ENCODE measurements at regions of chr14 and their contacts with region 1.

Region 1: GRCh38 chr14:24806061-24806678 is 172.2 kb upstream of the GZMB start:
- DNase-seq: peak; percentile 16
- ATAC-seq: peak; percentile 89
- H3K4me3 ChIP-seq: no peak overlapping the region
- H3K27ac ChIP-seq: no peak overlapping the region
- H3K4me1 ChIP-seq: no peaks in the 10 kb centered on the region
- H3K27me3 ChIP-seq: no peaks in the 10 kb centered on the region
- CTCF ChIP-seq: peak; percentile 79 to 92 (median 82)
- EP300 ChIP-seq: no peak
- POLR2A ChIP-seq: no peak
- RAD21 ChIP-seq: peak; percentile 75

Region 2: DNA sequence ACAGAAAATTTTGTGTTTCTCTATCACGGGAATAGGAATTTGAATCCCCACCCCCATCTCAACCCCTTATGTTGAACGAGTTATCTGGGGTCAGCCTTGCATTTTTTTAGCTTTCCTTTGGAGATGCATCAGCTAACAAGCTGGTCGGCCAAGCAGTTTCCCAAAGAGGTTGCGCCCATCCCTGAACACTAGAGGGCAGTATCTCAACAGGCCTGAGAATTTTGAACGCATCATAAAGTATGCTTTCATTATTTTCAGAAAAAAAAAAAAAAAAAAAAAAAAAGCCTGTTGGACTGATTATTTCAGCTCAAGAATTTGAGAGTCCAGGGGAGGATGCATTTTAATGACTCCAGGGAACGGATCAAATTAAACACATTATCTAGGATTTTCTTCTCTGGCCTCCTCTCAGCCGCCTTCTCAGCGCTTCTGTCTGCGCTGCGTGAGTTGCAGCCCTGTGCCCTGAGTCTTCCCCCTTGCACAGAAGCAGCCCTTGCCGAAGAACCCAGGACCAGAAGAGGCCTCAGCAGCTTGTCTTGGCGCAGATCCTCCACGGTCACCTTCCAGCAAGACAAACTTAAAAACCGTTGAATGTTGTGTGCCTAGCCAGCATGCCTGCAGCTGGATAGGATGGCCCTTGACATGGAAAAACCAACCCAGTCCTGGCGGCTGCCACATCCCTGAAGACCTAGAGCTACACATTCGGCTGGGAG is 95.6 kb before region 1 on chr14:
- CTCF ChIA-PET with region 1: interaction called, 188 read pairs
- POLR2A ChIA-PET with region 1: no interaction called
- RAD21 ChIA-PET with region 1: interaction called, 107 read pairs
- SMC1A ChIA-PET with region 1: interaction called, 217 read pairs
- in situ Hi-C with region 1: no loop called
- intact Hi-C with region 1: no loop called
- DNase-seq: no peak
- ATAC-seq: peak; percentile 50
- H3K4me3 ChIP-seq: no peak overlapping the region
- H3K27ac ChIP-seq: no peak overlapping the region
- H3K4me1 ChIP-seq: peaks cover 15% of the 10 kb centered on the region
- H3K27me3 ChIP-seq: no peaks in the 10 kb centered on the region
- CTCF ChIP-seq: peak; percentile 81 to 89 (median 82)
- EP300 ChIP-seq: no peak
- POLR2A ChIP-seq: no peak
- RAD21 ChIP-seq: peak; percentile 80

Region 3: GRCh38 chr14:24837280-24838046 is 31.3 kb after region 1 on chr14:
- CTCF ChIA-PET with region 1: interaction called, 13 read pairs
- POLR2A ChIA-PET with region 1: no interaction called
- RAD21 ChIA-PET with region 1: interaction called, 11 read pairs
- SMC1A ChIA-PET with region 1: interaction called, 27 read pairs
- in situ Hi-C with region 1: no loop called
- intact Hi-C with region 1: no loop called
- DNase-seq: no peak
- ATAC-seq: 0 out of 3 replicates have a peak, but pooled peaks have one; percentile 13
- H3K4me3 ChIP-seq: no peak overlapping the region
- H3K27ac ChIP-seq: no peak overlapping the region
- H3K4me1 ChIP-seq: no peaks in the 10 kb centered on the region
- H3K27me3 ChIP-seq: no peaks in the 10 kb centered on the region
- CTCF ChIP-seq: no peak
- EP300 ChIP-seq: no peak
- POLR2A ChIP-seq: no peak
- RAD21 ChIP-seq: no peak

Region 4: DNA sequence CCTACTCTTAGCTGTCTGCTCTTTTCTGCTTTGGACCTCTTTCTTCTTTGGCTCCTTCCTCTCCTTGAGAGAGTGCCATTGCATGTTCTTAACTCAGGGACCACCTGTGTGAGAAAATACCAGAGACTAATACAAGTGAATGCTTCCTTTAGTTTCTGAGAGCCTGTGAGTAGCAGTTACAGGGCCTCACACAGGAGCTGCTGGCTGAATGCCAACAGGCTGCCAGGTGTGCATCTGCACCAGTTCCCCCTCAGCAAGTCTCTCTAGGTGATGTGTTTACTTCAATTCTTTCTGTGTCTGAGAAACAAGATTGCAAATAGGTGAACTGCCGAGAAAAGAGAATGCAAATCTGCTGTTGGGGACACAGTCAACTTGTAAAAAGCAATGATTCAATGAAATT is 135.5 kb after region 1 on chr14:
- CTCF ChIA-PET with region 1: interaction called, 10 read pairs
- POLR2A ChIA-PET with region 1: no interaction called
- RAD21 ChIA-PET with region 1: interaction called, 8 read pairs
- SMC1A ChIA-PET with region 1: interaction called, 8 read pairs
- in situ Hi-C with region 1: no loop called
- intact Hi-C with region 1: loop called (anchors 10 kb)
- DNase-seq: no peak
- ATAC-seq: peak; percentile 36
- H3K4me3 ChIP-seq: no peak overlapping the region
- H3K27ac ChIP-seq: peak overlapping the region; percentile 30; the same call in 1 of the 2 replicates
- H3K4me1 ChIP-seq: no peaks in the 10 kb centered on the region; the same call in none of the 2 replicates
- H3K27me3 ChIP-seq: no peaks in the 10 kb centered on the region
- CTCF ChIP-seq: no peak
- EP300 ChIP-seq: no peak
- POLR2A ChIP-seq: no peak
- RAD21 ChIP-seq: no peak

Region 5: GRCh38 chr14:25026476-25027137 is 220.4 kb after region 1 on chr14:
- CTCF ChIA-PET with region 1: interaction called, 45 read pairs
- POLR2A ChIA-PET with region 1: interaction called, 3 read pairs
- RAD21 ChIA-PET with region 1: interaction called, 42 read pairs
- SMC1A ChIA-PET with region 1: interaction called, 39 read pairs
- in situ Hi-C with region 1: no loop called
- intact Hi-C with region 1: no loop called
- DNase-seq: peak; percentile 15
- ATAC-seq: peak; percentile 84
- H3K4me3 ChIP-seq: no peak overlapping the region
- H3K27ac ChIP-seq: no peak overlapping the region
- H3K4me1 ChIP-seq: no peaks in the 10 kb centered on the region
- H3K27me3 ChIP-seq: no peaks in the 10 kb centered on the region
- CTCF ChIP-seq: no peak
- EP300 ChIP-seq: peak in 1 of 2 experiments; percentile 24; a peak in 2 of 4 replicates
- POLR2A ChIP-seq: no peak
- RAD21 ChIP-seq: no peak

Region 6: GRCh38 chr14:25069879-25070278 is 263.7 kb after region 1 on chr14:
- CTCF ChIA-PET with region 1: interaction called, 21 read pairs
- POLR2A ChIA-PET with region 1: no interaction called
- RAD21 ChIA-PET with region 1: interaction called, 5 read pairs
- SMC1A ChIA-PET with region 1: interaction called, 6 read pairs
- in situ Hi-C with region 1: no loop called
- intact Hi-C with region 1: no loop called
- DNase-seq: no peak
- ATAC-seq: no peak
- H3K4me3 ChIP-seq: no peak overlapping the region
- H3K27ac ChIP-seq: no peak overlapping the region
- H3K4me1 ChIP-seq: no peaks in the 10 kb centered on the region
- H3K27me3 ChIP-seq: no peaks in the 10 kb centered on the region
- CTCF ChIP-seq: no peak
- EP300 ChIP-seq: no peak
- POLR2A ChIP-seq: no peak
- RAD21 ChIP-seq: no peak